ENCODE measurements at regions of chr21 and their contacts with region 1.

Region 1: GRCh38 chr21:33199516-33200217 is 30.1 kb upstream of the IFNAR2 start:
- DNase-seq: peak; percentile 43 to 61
- ATAC-seq: peak; percentile 85 to 92 (median 86)
- H3K4me3 ChIP-seq: no peak overlapping the region
- H3K27ac ChIP-seq: peak overlapping the region; percentile 69
- H3K4me1 ChIP-seq: peaks cover 21% of the 10 kb centered on the region
- H3K27me3 ChIP-seq: no peaks in the 10 kb centered on the region
- CTCF ChIP-seq: peak; percentile 81

Region 2: DNA sequence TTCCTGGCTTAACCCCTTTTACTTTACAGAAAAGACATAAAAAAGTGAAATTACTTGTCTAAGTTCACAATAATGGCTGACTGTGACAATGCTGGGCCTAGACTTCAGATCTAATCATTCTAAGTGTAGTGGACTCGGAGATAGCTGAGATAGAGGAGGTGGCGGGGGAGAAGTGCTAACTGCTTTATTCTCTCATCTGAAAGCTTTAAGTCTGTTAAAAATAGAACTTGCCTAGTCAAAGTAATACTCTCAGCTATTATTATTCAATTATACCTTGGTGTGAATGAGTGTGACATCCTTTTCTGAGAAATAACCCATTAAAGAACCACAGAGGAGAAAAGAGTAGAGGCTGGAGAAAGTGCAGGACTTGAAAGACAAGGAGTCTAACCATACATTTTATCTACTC is 270.0 kb before region 1 on chr21:
- intact Hi-C with region 1: no loop called
- DNase-seq: no peak
- ATAC-seq: no peak
- H3K4me3 ChIP-seq: no peak overlapping the region
- H3K27ac ChIP-seq: no peak overlapping the region
- H3K4me1 ChIP-seq: no peaks in the 10 kb centered on the region
- H3K27me3 ChIP-seq: no peaks in the 10 kb centered on the region
- CTCF ChIP-seq: no peak

Region 3: GRCh38 chr21:32940079-32941014 is 259.3 kb before region 1 on chr21:
- intact Hi-C with region 1: loop called (anchors 2 to 10 kb)
- DNase-seq: no peak
- ATAC-seq: peak in 3 of 4 donors; percentile 55 to 72 (median 57)
- H3K4me3 ChIP-seq: no peak overlapping the region
- H3K27ac ChIP-seq: no peak overlapping the region
- H3K4me1 ChIP-seq: no peaks in the 10 kb centered on the region
- H3K27me3 ChIP-seq: no peaks in the 10 kb centered on the region
- CTCF ChIP-seq: peak; percentile 82

Region 4: GRCh38 chr21:33265664-33266049 is 66.0 kb after region 1 on chr21:
- intact Hi-C with region 1: loop called in 1 of 2 experiments (anchors 2 kb)
- DNase-seq: peak; percentile 40 to 65
- ATAC-seq: peak; percentile 36 to 61 (median 48)
- H3K4me3 ChIP-seq: peak overlapping the region; percentile 87
- H3K27ac ChIP-seq: peak overlapping the region; percentile 79
- H3K4me1 ChIP-seq: no peaks in the 10 kb centered on the region
- H3K27me3 ChIP-seq: no peaks in the 10 kb centered on the region
- CTCF ChIP-seq: no peak

Region 5: DNA sequence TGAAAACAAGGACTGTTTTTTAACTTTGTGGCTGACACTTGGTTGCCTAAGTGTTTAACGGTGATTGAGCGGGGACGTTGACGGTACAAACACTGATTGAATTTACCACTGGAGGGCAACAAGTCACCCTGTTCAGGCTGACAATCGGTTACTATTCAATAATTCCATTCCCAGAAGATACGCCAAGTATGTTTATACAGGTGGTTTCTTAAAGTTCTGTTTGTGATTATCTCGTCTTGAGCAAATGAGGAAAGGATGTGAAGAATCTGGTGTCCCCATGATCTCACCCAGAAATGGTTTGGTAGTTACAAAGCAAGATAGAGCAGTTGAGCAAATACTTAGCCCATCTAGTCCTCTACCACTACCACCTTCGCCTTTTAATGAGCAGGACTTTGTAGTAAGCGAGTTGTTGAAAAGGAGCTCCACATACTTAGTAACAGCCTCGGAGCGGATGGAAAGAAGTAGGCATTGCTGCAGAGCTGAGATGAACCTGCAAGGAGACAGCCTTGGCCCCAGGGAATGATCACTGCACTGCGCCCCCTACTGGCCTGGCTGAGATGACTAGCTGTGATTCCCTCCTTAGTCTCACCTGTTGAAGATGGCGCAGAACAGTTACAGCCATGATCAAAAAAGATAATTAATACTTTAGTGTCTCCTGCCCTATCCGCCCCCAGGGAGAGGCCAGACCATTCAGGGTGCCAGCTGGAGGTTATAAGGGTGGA is 161.4 kb after region 1 on chr21:
- intact Hi-C with region 1: loop called in 1 of 2 experiments (anchors 5 kb)
- DNase-seq: peak; percentile 73 to 81
- ATAC-seq: peak; percentile 92 to 94 (median 94)
- H3K4me3 ChIP-seq: peak overlapping the region; percentile 41
- H3K27ac ChIP-seq: peak overlapping the region; percentile 0
- H3K4me1 ChIP-seq: peaks cover 12% of the 10 kb centered on the region
- H3K27me3 ChIP-seq: no peaks in the 10 kb centered on the region
- CTCF ChIP-seq: peak; percentile 80

Region 6: GRCh38 chr21:33441489-33442477 is 242.1 kb after region 1 on chr21:
- intact Hi-C with region 1: loop called (anchors 2 to 5 kb)
- DNase-seq: peak; percentile 37 to 67
- ATAC-seq: peak in 2 of 4 donors; percentile 35 to 43
- H3K4me3 ChIP-seq: no peak overlapping the region
- H3K27ac ChIP-seq: no peak overlapping the region
- H3K4me1 ChIP-seq: no peaks in the 10 kb centered on the region
- H3K27me3 ChIP-seq: no peaks in the 10 kb centered on the region
- CTCF ChIP-seq: no peak

Region 7: GRCh38 chr21:33608559-33608958 is 408.9 kb after region 1 on chr21:
- intact Hi-C with region 1: loop called in 1 of 2 experiments (anchors 5 kb)
- DNase-seq: no peak
- ATAC-seq: no peak
- H3K4me3 ChIP-seq: no peak overlapping the region
- H3K27ac ChIP-seq: no peak overlapping the region
- H3K4me1 ChIP-seq: peaks cover 8% of the 10 kb centered on the region
- H3K27me3 ChIP-seq: no peaks in the 10 kb centered on the region
- CTCF ChIP-seq: no peak

Measured in psoas muscle (tissue), 8 donors.